ENCODE measurements at regions of chr5 and their contacts with region 1.

Region 1: DNA sequence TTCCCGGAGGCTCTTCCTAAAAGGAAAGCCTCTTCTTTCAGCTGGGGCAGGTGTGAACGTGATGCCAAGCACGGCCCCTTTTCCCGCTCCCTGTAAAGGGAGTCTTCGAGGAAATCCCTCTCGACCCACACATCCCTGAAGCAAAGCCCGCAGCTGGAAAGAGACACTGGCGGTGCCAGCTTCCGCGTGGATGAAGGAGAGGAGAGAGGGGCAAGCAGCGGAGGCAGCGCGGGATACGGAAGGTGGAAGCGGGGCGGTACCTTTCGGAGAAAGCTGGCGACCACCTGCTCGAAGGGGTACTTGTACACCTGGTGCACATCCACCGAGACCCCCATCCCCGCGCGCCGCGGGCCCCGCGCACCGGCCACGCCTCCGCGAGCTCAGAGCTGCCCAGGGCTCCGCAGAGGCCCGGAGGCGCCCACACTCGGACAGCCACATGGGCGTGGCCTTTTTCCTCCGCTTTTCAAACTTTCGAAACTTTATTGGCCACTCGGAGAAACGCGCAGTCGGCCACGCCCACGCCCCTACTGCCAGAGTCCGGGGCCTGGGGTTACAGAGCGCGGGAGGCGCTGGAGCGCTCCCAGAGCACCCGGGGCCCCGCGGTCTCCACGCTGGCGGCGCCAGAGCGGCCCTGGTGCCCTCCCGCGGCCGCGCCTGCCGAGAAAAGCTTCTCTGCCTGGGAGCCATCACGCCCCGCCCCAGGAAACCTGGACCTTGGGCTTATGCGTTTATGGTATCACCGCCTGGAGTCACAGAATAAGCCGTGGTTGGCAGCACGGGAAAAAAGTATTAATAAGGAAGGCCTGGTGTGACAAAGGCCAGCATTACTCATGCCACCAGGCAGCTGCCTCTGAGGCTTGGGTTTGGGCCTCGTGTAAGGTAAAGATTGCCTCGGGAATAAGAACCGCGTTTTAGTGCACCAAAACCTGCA is at the start of gene PRELID2:
- DNase-seq: peak; percentile 92 to 95
- H3K4me3 ChIP-seq: peak within 1 kb of the TSS; percentile 53
- H3K4me1 ChIP-seq: peaks cover 11% of the 10 kb centered on the region
- H3K27me3 ChIP-seq: no peaks in the 10 kb centered on the region

Region 2: GRCh38 chr5:144237851-144238250 is 1597.3 kb before region 1 on chr5:
- in situ Hi-C with region 1: loop called (anchors 25 kb)
- DNase-seq: no peak
- H3K4me3 ChIP-seq: no peak overlapping the region
- H3K4me1 ChIP-seq: peaks cover 3% of the 10 kb centered on the region; the same call in 1 of the 2 replicates
- H3K27me3 ChIP-seq: no peaks in the 10 kb centered on the region

Region 3: DNA sequence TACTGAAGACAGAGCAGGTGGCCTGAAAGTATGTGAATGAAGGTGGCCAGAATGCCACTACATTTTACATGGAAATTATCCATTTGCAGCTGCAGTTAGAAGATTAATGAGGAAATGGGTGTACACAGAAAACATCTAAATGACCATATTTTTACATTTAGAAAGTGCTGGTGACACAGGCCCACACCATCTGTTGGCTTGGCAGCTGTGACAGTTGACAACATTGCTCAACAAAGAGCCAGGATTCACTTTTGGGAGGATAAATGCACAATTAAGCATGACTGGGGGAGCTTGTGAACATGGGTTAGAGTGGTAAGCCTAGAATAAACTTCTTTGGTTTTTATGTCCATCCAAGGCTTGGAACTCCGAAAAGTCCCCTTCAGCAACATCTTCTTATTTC is 1304.0 kb before region 1 on chr5:
- in situ Hi-C with region 1: no loop called
- DNase-seq: no peak
- H3K4me3 ChIP-seq: no peak overlapping the region
- H3K4me1 ChIP-seq: no peaks in the 10 kb centered on the region
- H3K27me3 ChIP-seq: no peaks in the 10 kb centered on the region

Region 4: GRCh38 chr5:146049014-146049703 is 214.0 kb after region 1 on chr5:
- in situ Hi-C with region 1: loop called (anchors 10 kb)
- DNase-seq: peak; percentile 70 to 76
- H3K4me3 ChIP-seq: no peak overlapping the region
- H3K4me1 ChIP-seq: no peaks in the 10 kb centered on the region
- H3K27me3 ChIP-seq: no peaks in the 10 kb centered on the region